ENCODE measurements at regions of chr3 and their contacts with region 1.

Region 1: DNA sequence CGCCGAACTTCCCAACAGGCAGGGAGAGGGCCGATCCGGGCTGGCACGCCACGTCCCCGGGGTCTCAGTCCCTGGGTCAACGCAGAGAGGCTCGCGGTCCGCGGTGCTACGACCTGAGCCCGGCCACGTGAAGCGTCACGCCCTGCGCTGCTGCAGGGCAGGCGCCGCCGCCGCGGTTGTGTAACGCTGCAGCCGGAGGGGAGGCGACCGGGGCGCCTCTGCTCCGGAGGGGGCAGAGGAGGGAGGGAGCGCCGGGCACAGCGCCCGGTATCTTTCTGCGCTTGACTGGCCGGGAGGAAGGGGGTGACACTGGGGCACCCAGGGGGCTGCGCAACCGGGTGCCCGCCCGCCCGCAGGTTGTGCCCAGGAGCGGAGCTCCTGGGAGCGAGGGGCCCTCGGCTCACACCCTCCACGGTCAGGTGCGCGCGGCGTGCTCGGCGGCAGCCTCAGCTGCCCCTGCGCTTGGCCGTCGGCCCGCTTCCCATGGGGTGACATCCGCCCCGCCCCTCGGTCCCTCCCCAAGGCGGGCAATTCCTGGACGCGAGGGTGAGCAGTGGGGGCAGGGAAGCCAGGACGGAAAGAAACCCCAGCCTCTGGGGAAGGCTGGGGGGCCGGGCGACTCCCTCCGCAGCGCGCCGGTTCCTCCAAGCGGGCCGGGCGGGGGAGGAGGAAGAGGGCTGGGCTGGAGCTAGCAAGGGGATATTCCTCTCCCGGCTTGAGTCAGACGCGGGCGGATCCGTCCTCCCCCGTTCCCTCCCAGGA is 852 bp upstream of the BHLHE40 start:
- DNase-seq: peak; percentile 99
- ATAC-seq: peak; percentile 57
- H3K4me3 Mint-ChIP-seq: peak overlapping the region; percentile 93
- H3K27ac Mint-ChIP-seq: peak overlapping the region; percentile 98
- H3K4me1 Mint-ChIP-seq: peaks cover 39% of the 10 kb centered on the region
- H3K27me3 Mint-ChIP-seq: no peaks in the 10 kb centered on the region

Region 2: GRCh38 chr3:4722103-4722502 is 256.3 kb before region 1 on chr3:
- CTCF ChIA-PET with region 1: interaction called, 19 read pairs
- POLR2A ChIA-PET with region 1: no interaction called
- intact Hi-C with region 1: loop called (anchors 1 kb)
- DNase-seq: peak; percentile 58
- ATAC-seq: peak; percentile 93
- H3K4me3 Mint-ChIP-seq: no peak overlapping the region
- H3K27ac Mint-ChIP-seq: peak overlapping the region; percentile 51
- H3K4me1 Mint-ChIP-seq: peaks cover 32% of the 10 kb centered on the region
- H3K27me3 Mint-ChIP-seq: no peaks in the 10 kb centered on the region

Region 3: GRCh38 chr3:4804161-4805058 is 174.0 kb before region 1 on chr3:
- CTCF ChIA-PET with region 1: interaction called, 5 read pairs
- POLR2A ChIA-PET with region 1: interaction called, 6 read pairs
- intact Hi-C with region 1: loop called (anchors 1 kb)
- DNase-seq: peak; percentile 48
- ATAC-seq: no peak
- H3K4me3 Mint-ChIP-seq: peak overlapping the region; percentile 4
- H3K27ac Mint-ChIP-seq: peak overlapping the region; percentile 73
- H3K4me1 Mint-ChIP-seq: peaks cover 39% of the 10 kb centered on the region
- H3K27me3 Mint-ChIP-seq: no peaks in the 10 kb centered on the region

Region 4: DNA sequence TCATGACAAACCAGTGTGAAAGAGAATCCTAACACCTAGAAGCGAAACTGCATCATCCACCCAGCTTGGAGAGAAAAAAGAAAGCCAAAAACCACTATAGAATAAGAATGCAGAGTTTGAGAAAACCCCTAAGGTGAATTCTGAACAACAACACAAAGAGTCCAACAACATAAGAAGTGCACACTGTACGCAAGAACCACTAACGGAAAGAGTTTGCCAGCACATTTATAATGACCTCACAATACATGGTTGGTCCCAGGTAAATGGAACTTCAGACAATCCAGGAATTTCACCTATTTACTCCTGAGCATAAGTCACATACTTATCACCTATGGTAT is 127.5 kb before region 1 on chr3:
- CTCF ChIA-PET with region 1: interaction called, 22 read pairs
- POLR2A ChIA-PET with region 1: interaction called, 34 read pairs
- intact Hi-C with region 1: loop called (anchors 1 kb)
- DNase-seq: peak; percentile 56
- ATAC-seq: peak; percentile 72
- H3K4me3 Mint-ChIP-seq: peak overlapping the region; percentile 39
- H3K27ac Mint-ChIP-seq: peak overlapping the region; percentile 98
- H3K4me1 Mint-ChIP-seq: peaks cover 84% of the 10 kb centered on the region
- H3K27me3 Mint-ChIP-seq: no peaks in the 10 kb centered on the region

Region 5: DNA sequence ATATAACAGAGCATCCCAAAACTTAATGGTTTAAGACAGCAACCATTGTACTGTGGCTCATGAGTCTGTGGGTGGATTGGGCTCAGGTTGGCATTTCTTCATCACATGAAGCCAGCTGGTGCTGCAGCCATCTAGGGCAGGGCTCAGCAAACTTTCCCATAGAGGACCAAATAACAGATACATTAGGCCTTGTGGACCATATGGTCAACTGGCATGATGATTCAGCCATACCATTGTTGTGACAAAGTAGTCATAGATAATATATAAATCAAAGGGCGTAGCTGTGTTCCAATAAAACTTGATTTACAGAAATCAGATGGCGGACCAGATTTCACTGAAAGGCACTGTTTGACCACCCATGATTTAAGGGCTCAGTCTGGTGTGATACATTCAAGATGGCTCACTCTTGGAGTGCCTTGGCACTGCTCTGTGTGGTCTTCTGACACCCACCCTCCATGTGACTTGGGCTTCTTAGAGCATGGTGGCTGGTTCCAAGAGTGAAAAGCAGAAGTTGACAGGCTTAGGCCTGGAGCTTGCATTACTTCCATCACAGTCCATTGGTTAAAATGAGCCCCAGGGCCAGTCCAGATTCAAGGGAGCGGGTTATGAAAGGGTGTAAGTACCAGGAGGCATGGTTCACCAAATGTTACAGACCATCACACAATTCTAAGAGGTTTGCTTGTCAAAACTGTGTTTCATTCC is 40.0 kb before region 1 on chr3:
- CTCF ChIA-PET with region 1: interaction called, 10 read pairs
- POLR2A ChIA-PET with region 1: no interaction called
- intact Hi-C with region 1: no loop called
- DNase-seq: no peak
- ATAC-seq: no peak
- H3K4me3 Mint-ChIP-seq: no peak overlapping the region
- H3K27ac Mint-ChIP-seq: no peak overlapping the region
- H3K4me1 Mint-ChIP-seq: peaks cover 15% of the 10 kb centered on the region
- H3K27me3 Mint-ChIP-seq: no peaks in the 10 kb centered on the region

Region 6: DNA sequence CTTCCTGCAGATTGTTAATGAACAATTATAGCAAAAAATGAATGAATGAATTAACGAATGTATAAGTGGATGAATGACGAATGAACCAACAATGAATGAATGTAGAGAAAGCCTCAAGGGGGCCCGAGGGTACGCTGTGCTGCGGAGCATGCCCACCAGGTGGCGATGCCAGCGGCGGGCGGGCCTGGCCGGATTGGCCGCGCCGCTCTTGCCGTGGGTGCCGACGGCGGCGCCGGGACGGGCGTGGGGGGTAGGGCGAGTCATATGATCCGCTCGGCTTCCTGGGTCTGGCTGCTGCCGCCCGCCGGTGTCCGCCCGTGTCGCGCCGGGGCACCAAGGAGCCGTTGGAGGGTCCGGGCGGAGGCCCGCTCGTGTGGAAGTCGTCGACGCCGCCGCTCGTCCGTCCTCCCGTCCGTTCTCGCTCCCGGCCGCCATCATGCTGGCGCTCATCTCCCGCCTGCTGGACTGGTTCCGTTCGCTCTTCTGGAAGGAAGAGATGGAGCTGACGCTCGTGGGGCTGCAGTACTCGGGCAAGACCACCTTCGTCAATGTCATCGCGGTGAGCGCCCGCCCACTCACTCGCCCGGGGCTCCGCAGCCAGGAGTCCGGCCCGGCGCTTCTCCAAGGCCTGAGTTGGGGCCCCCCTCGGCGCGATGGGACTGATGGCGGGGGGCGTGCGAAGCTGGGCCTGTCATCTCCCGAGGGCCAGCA is 143.8 kb after region 1 on chr3 and contains the start of gene ARL8B:
- CTCF ChIA-PET with region 1: no interaction called
- POLR2A ChIA-PET with region 1: interaction called, 5 read pairs
- intact Hi-C with region 1: loop called (anchors 1 to 5 kb)
- DNase-seq: peak; percentile 96
- ATAC-seq: peak; percentile 84
- H3K4me3 Mint-ChIP-seq: peak within 1 kb of the TSS; percentile 83
- H3K27ac Mint-ChIP-seq: peak within 1 kb of the TSS; percentile 94
- H3K4me1 Mint-ChIP-seq: peaks cover 42% of the 10 kb centered on the region
- H3K27me3 Mint-ChIP-seq: no peaks in the 10 kb centered on the region
- total RNA-seq, gene ARL8B: 44.7 to 45.1 TPM

Region 7: GRCh38 chr3:5616873-5617272 is 638.5 kb after region 1 on chr3:
- CTCF ChIA-PET with region 1: no interaction called
- POLR2A ChIA-PET with region 1: no interaction called
- intact Hi-C with region 1: no loop called
- DNase-seq: no peak
- ATAC-seq: no peak
- H3K4me3 Mint-ChIP-seq: no peak overlapping the region
- H3K27ac Mint-ChIP-seq: no peak overlapping the region
- H3K4me1 Mint-ChIP-seq: no peaks in the 10 kb centered on the region
- H3K27me3 Mint-ChIP-seq: no peaks in the 10 kb centered on the region